CD4-positive, alpha-beta T cell (primary cell): ENCODE measurements at regions of chr1 and their contacts with region 1.

Region 1: GRCh38 chr1:231337472-231338269 is at the start of gene EXOC8:
- DNase-seq: peak; percentile 95 to 99 (median 96)
- ATAC-seq: peak; percentile 75
- H3K4me3 ChIP-seq: peak within 1 kb of the TSS; percentile 97
- H3K4me3 Mint-ChIP-seq: peak within 1 kb of the TSS; percentile 99
- H3K27ac ChIP-seq: peak within 1 kb of the TSS; percentile 98 to 100
- H3K27ac Mint-ChIP-seq: peak within 1 kb of the TSS; percentile 100
- H3K4me1 ChIP-seq: peaks cover 47% of the 10 kb centered on the region
- H3K4me1 Mint-ChIP-seq: peaks cover 76% of the 10 kb centered on the region
- H3K27me3 ChIP-seq: no peaks in the 10 kb centered on the region
- H3K27me3 Mint-ChIP-seq: peaks cover 5% of the 10 kb centered on the region
- CTCF ChIP-seq: peak; percentile 33
- total RNA-seq, gene EXOC8: 28.0 to 31.9 TPM

Region 2: GRCh38 chr1:230978491-230979388 is 358.9 kb before region 1 on chr1 and contains the starts of genes ARV1 and TTC13:
- CTCF ChIA-PET with region 1: no interaction called
- POLR2A ChIA-PET with region 1: interaction called, 7 read pairs
- intact Hi-C with region 1: loop called in 1 of 2 experiments (anchors 5 kb)
- DNase-seq: peak; percentile 89 to 99 (median 96)
- ATAC-seq: peak; percentile 89
- H3K4me3 ChIP-seq: peak within 1 kb of the TSS; percentile 84
- H3K4me3 Mint-ChIP-seq: peak within 1 kb of the TSS; percentile 99
- H3K27ac ChIP-seq: peak within 1 kb of the TSS; percentile 76 to 78
- H3K27ac Mint-ChIP-seq: peak within 1 kb of the TSS; percentile 94
- H3K4me1 ChIP-seq: peaks cover 50% of the 10 kb centered on the region
- H3K4me1 Mint-ChIP-seq: peaks cover 35% of the 10 kb centered on the region
- H3K27me3 ChIP-seq: no peaks in the 10 kb centered on the region
- H3K27me3 Mint-ChIP-seq: no peaks in the 10 kb centered on the region
- CTCF ChIP-seq: peak; percentile 71
- total RNA-seq, gene ARV1: 1.5 to 1.8 TPM
- total RNA-seq, gene TTC13: 24.9 to 25.0 TPM

Region 3: DNA sequence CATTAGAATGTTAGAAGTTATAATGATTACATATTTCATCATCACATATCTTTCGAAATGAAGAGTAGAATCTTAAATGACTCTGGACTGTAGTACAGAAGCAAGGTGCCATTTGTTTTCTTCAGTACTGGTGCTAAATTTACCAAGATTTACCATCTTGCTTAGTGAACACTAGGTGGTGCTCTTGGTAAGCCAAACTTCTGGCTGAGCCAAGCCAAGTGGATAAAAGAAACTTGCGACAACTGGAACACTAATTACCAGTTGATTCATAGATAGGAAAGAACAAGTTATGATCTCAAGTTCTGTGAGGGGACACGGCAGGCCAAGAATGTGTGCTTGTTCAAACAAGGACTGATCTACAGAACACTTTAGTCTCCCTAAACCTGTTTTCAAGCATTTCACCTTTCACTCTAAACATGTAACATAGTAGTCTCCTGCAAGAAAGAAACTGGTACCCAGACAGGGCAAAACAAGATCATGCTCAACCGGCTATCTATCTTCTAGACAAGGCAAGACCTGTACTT is 20.2 kb after region 1 on chr1:
- CTCF ChIA-PET with region 1: interaction called, 3 read pairs
- POLR2A ChIA-PET with region 1: interaction called, 16 read pairs
- intact Hi-C with region 1: loop called in 1 of 2 experiments (anchors 2 kb)
- DNase-seq: peak in 7 of 14 experiments; percentile 19 to 76 (median 47)
- ATAC-seq: peak; percentile 91
- H3K4me3 ChIP-seq: no peak overlapping the region
- H3K4me3 Mint-ChIP-seq: no peak overlapping the region
- H3K27ac ChIP-seq: no peak overlapping the region
- H3K27ac Mint-ChIP-seq: peak overlapping the region; percentile 51
- H3K4me1 ChIP-seq: no peaks in the 10 kb centered on the region
- H3K4me1 Mint-ChIP-seq: peaks cover 7% of the 10 kb centered on the region
- H3K27me3 ChIP-seq: no peaks in the 10 kb centered on the region
- H3K27me3 Mint-ChIP-seq: no peaks in the 10 kb centered on the region
- CTCF ChIP-seq: peak; percentile 88

Region 4: GRCh38 chr1:231528172-231529029 is 190.7 kb after region 1 on chr1 and contains the start of gene TSNAX:
- CTCF ChIA-PET with region 1: interaction called, 3 read pairs
- POLR2A ChIA-PET with region 1: interaction called, 34 read pairs
- intact Hi-C with region 1: loop called (anchors 2 to 5 kb)
- DNase-seq: peak; percentile 81 to 96 (median 88)
- ATAC-seq: peak; percentile 85
- H3K4me3 ChIP-seq: peak within 1 kb of the TSS; percentile 70
- H3K4me3 Mint-ChIP-seq: peak within 1 kb of the TSS; percentile 94
- H3K27ac ChIP-seq: peak within 1 kb of the TSS; percentile 84 to 89
- H3K27ac Mint-ChIP-seq: peak within 1 kb of the TSS; percentile 97
- H3K4me1 ChIP-seq: peaks cover 38% of the 10 kb centered on the region
- H3K4me1 Mint-ChIP-seq: peaks cover 46% of the 10 kb centered on the region
- H3K27me3 ChIP-seq: no peaks in the 10 kb centered on the region
- H3K27me3 Mint-ChIP-seq: no peaks in the 10 kb centered on the region
- CTCF ChIP-seq: no peak
- total RNA-seq, gene TSNAX: 33.5 to 35.7 TPM

Region 5: DNA sequence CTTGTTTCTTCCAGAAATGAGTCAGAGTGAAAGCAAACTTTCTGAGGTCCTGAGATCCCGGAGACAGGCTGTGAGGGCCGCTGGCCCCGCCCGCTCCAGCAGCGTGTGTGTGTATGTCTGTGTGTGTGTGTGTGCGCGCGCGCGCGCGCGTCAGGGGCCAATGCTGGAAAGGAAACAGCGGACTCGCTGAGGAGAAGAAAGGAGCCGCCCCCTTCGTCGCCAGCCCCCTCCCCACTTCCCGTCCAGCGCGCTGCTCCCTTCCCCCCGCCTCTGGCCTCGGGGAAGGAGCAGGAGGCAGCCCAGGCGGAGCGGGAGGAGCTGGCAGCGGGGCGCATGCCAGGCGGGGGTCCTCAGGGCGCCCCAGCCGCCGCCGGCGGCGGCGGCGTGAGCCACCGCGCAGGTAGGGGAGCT is 288.9 kb after region 1 on chr1 and contains the start of gene DISC1:
- CTCF ChIA-PET with region 1: no interaction called
- POLR2A ChIA-PET with region 1: interaction called, 15 read pairs
- intact Hi-C with region 1: no loop called
- DNase-seq: peak; percentile 34 to 87 (median 62)
- ATAC-seq: peak; percentile 70
- H3K4me3 ChIP-seq: peak within 1 kb of the TSS; percentile 99
- H3K4me3 Mint-ChIP-seq: peak within 1 kb of the TSS; percentile 96
- H3K27ac ChIP-seq: peak within 1 kb of the TSS; percentile 68 to 76
- H3K27ac Mint-ChIP-seq: peak within 1 kb of the TSS; percentile 90
- H3K4me1 ChIP-seq: peaks cover 29% of the 10 kb centered on the region
- H3K4me1 Mint-ChIP-seq: peaks cover 33% of the 10 kb centered on the region
- H3K27me3 ChIP-seq: no peaks in the 10 kb centered on the region
- H3K27me3 Mint-ChIP-seq: no peaks in the 10 kb centered on the region
- CTCF ChIP-seq: no peak
- total RNA-seq, gene DISC1: 19.8 to 20.0 TPM